Activated naive CD4-positive, alpha-beta T cell treated with anti-CD3 and anti-CD28 coated beads for 36 hours (primary cell): ENCODE measurements at regions of chr17 and their contacts with region 1.

Region 1: GRCh38 chr17:49076573-49077384 is 55.8 kb upstream of the B4GALNT2 start:
- DNase-seq: no peak
- H3K4me3 Mint-ChIP-seq: no peak overlapping the region
- H3K27ac Mint-ChIP-seq: no peak overlapping the region
- H3K4me1 Mint-ChIP-seq: no peaks in the 10 kb centered on the region
- H3K27me3 Mint-ChIP-seq: peaks cover 17% of the 10 kb centered on the region

Region 2: DNA sequence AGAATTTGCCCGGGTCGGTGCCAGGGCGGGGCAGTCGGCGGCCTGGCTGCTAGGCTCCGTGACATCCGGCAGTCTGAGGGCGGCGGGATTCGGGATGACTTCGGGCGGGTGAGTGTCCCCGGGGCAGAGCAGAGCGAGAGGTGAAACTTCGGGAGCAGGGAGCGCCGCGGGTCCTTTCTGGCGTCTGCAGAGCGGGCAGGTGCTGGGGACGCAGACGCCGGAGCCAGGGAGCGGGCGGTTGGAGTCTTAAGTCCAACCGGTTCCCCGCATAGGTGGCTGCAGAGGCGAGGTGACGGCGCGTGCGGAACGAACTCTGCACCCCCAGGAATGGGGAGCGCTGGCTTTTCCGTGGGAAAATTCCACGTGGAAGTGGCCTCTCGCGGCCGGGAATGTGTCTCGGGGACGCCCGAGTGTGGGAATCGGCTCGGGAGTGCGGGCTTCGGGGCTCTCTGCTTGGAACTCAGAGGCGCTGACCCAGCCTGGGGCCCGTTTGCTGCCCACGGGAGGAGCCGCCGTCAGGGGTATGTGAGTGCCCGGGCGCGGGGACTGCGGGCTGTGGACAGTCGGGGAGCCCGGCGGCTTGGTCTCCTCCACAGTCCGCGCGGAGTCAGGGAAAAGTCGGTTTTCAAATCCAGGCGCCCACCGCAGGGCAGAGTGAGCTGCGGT is 56.1 kb after region 1 on chr17 and contains the start of gene B4GALNT2:
- CTCF ChIA-PET with region 1: no interaction called
- intact Hi-C with region 1: loop called (anchors 10 kb)
- DNase-seq: peak; percentile 39
- H3K4me3 Mint-ChIP-seq: peak within 1 kb of the TSS; percentile 45
- H3K27ac Mint-ChIP-seq: no peak within 1 kb of the TSS
- H3K4me1 Mint-ChIP-seq: peaks cover 9% of the 10 kb centered on the region
- H3K27me3 Mint-ChIP-seq: peaks cover 35% of the 10 kb centered on the region
- total RNA-seq, gene B4GALNT2: 0.02 TPM in 1 of 2 experiments, not detected in the other

Region 3: DNA sequence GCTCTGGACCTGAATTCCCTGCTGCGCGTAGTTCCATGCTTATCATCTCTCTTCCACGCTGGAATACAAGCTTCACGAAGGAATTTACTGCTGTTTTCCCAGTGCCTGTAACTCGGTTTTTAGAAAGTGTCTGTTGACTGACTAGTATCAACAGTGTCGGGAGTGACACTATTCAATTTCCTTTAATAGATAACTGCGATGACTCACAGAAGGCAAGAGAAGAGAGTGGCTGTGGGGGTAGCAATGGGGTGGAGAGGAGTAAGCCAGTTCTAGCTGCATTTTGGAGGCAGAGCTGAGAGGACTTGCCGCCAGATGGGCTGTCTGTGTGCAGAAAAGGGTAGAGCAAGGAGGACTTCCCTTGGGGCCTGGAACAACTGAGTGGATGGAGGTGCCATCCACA is 81.0 kb after region 1 on chr17:
- CTCF ChIA-PET with region 1: no interaction called
- intact Hi-C with region 1: no loop called
- DNase-seq: no peak
- H3K4me3 Mint-ChIP-seq: no peak overlapping the region
- H3K27ac Mint-ChIP-seq: no peak overlapping the region
- H3K4me1 Mint-ChIP-seq: no peaks in the 10 kb centered on the region
- H3K27me3 Mint-ChIP-seq: peaks cover 13% of the 10 kb centered on the region